ENCODE measurements at regions of chr15 and their contacts with region 1.

Region 1: GRCh38 chr15:79257454-79257853 is 25.1 kb upstream of the ANKRD34C start:
- DNase-seq: no peak
- H3K4me3 ChIP-seq: no peak overlapping the region
- H3K27ac ChIP-seq: no peak overlapping the region
- H3K4me1 ChIP-seq: no peaks in the 10 kb centered on the region
- H3K27me3 ChIP-seq: no peaks in the 10 kb centered on the region
- CTCF ChIP-seq: no peak
- POLR2A ChIP-seq: no peak

Region 2: DNA sequence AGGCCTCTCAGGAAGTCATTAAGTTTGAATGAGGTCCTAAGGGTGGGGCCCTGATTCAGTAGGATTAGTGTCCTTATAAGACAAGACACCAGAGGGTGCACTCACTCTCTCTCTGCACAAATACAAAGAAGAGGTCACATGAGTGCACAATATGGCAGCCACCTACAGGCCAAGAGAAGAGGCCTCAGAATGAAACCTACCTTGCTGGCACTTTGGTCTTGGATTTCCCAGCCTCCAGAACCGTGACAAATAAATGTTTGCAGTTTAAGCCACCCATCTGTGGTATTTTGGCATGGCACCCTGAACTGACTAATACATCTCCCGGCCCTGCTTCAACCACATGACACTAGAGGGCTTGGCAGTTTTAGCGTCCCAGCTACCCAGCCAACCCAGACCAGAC is 542.6 kb before region 1 on chr15:
- CTCF ChIA-PET with region 1: no interaction called
- POLR2A ChIA-PET with region 1: no interaction called
- dilution Hi-C with region 1: no loop called
- intact Hi-C with region 1: loop called (anchors 5 kb)
- DNase-seq: no peak
- H3K4me3 ChIP-seq: no peak overlapping the region
- H3K27ac ChIP-seq: no peak overlapping the region
- H3K4me1 ChIP-seq: no peaks in the 10 kb centered on the region
- H3K27me3 ChIP-seq: peaks cover 4 to 14% of the 10 kb centered on the region in 2 experiments
- CTCF ChIP-seq: no peak
- POLR2A ChIP-seq: no peak

Region 3: DNA sequence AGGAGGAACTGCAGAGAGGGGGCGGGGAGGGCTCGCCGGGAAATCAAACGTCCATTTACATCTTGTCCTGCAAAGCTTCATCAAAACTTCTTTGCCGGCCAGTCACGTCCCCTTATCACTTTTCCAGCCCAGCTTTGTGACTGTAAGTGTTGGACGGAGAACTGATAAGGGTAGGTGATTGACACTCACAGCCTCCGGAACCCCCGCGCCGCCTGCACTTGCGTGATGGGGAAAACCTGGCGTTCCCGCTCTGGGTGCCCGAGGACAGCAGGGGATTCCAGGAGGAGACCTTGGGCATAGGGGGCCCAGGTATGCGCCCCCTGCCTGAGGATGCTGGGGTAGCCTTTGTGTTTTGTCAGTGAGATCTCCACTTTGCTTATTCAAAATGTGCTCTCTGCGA is 47.8 kb before region 1 on chr15:
- CTCF ChIA-PET with region 1: no interaction called
- POLR2A ChIA-PET with region 1: no interaction called
- dilution Hi-C with region 1: no loop called
- intact Hi-C with region 1: no loop called
- DNase-seq: no peak
- H3K4me3 ChIP-seq: no peak overlapping the region
- H3K27ac ChIP-seq: no peak overlapping the region
- H3K4me1 ChIP-seq: no peaks in the 10 kb centered on the region
- H3K27me3 ChIP-seq: peaks cover 0 to 3% of the 10 kb centered on the region in 2 experiments
- CTCF ChIP-seq: peak in 1 of 2 donors; percentile 9
- POLR2A ChIP-seq: no peak

Region 4: DNA sequence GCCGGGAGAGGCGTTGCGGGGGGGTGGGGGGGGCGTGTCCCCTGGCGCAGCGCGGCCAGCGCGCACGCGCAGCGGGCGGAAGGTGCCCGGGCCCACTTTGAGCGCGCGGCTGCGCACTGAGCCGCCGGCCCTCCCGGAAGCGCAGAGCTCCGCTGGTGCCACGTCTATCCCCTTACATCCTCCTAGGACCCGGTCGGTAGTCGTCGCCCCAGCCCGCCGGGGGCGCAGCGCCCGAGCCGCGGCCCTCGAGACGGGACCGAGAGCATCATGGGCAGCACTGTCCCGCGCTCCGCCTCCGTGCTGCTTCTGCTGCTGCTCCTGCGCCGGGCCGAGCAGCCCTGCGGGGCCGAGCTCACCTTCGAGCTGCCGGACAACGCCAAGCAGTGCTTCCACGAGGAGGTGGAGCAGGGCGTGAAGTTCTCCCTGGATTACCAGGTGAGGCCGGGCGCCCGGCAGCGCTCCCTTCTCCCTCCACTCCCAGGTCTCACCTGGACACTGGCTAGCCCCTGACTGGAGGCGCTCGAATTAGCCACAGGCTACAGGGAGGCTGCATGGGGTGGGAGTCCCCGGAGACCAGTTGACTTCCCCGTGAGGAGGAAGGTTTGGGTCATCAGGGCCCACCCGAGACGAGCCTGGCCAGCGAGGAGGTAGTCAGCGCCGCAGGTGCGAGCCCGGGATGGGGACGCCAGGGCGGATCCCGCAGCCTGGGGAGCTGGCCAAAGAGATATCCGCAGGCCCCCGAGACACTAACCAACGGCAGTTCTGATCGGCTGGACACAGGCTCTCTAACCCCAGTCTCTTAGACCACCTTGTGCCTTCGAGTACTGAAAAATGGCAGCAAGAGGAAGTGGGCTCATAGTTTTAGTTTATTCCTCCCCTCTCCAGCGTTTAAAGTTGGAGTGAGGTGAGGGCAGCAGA is 53.8 kb after region 1 on chr15 and contains the start of gene TMED3:
- CTCF ChIA-PET with region 1: no interaction called
- POLR2A ChIA-PET with region 1: no interaction called
- dilution Hi-C with region 1: no loop called
- intact Hi-C with region 1: loop called (anchors 10 kb)
- DNase-seq: peak; percentile 85
- H3K4me3 ChIP-seq: peak within 1 kb of the TSS; percentile 61 to 74 (median 65)
- H3K27ac ChIP-seq: peak within 1 kb of the TSS; percentile 22
- H3K4me1 ChIP-seq: peaks cover 16% of the 10 kb centered on the region
- H3K27me3 ChIP-seq: peaks cover 13 to 28% of the 10 kb centered on the region in 2 experiments
- CTCF ChIP-seq: peak; percentile 18 to 35
- POLR2A ChIP-seq: peak; percentile 77
- total RNA-seq, gene TMED3: 105 and 114 TPM in 2 replicates

Measured in endothelial cell of umbilical vein (primary cell).